Astrocyte of the cerebellum (primary cell): ENCODE measurements at regions of chr10 and their contacts with region 1.

Region 1: GRCh38 chr10:115710172-115710571 is 562.8 kb downstream of the GFRA1 start:
- DNase-seq: no peak
- H3K4me3 ChIP-seq: no peak overlapping the region
- CTCF ChIP-seq: no peak

Region 2: GRCh38 chr10:115762029-115762428 is 51.9 kb after region 1 on chr10:
- in situ Hi-C with region 1: no loop called
- DNase-seq: no peak
- H3K4me3 ChIP-seq: no peak overlapping the region
- CTCF ChIP-seq: no peak

Region 3: GRCh38 chr10:115795964-115796363 is 85.8 kb after region 1 on chr10:
- in situ Hi-C with region 1: loop called (anchors 5 kb)
- DNase-seq: no peak
- H3K4me3 ChIP-seq: no peak overlapping the region
- CTCF ChIP-seq: no peak